ENCODE measurements at regions of chr11 and their contacts with region 1.

Region 1: DNA sequence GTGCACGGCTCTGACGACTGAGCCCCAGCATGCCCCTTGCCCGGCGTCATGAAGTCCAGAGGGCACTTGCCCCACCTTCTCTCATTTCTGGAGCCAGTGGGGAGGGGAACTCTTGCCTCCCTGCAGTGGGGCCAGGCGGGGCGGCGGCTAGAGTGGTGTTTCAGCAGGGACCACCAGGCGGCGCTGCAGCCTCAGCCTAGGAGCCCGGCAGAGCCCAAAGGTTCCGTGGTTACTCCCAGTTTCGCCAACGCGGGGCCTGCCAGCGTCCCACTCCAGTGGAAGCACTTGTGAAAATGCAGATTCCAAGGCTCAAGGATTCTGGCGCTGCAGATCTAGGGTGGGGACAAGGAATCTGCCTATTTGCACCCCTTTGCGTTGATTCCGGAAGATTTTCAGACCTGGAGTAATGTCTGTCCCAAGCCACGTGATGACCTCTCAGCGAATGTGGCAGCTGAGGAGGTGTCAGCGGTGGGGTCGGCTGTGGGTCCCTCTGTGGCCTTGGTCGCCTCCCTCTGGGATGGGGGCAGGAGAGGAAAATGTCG is 55.7 kb downstream of the CD82 start:
- DNase-seq: peak in 1 of 2 donors; percentile 49
- ATAC-seq: peak; percentile 41 to 63
- H3K4me3 ChIP-seq: no peak overlapping the region
- H3K27ac ChIP-seq: no peak overlapping the region
- H3K4me1 ChIP-seq: peaks cover 8 to 9% of the 10 kb centered on the region in 2 donors
- H3K27me3 ChIP-seq: no peaks in the 10 kb centered on the region
- CTCF ChIP-seq: peak; percentile 92 to 97 (median 95)
- POLR2A ChIP-seq: no peak

Region 2: GRCh38 chr11:44398266-44399045 is 222.8 kb before region 1 on chr11:
- in situ Hi-C with region 1: no loop called
- intact Hi-C with region 1: no loop called
- DNase-seq: no peak
- ATAC-seq: no peak
- H3K4me3 ChIP-seq: no peak overlapping the region
- H3K27ac ChIP-seq: no peak overlapping the region
- H3K4me1 ChIP-seq: no peaks in the 10 kb centered on the region
- H3K27me3 ChIP-seq: peaks cover 0 to 5% (median 5%) of the 10 kb centered on the region in 3 donors
- CTCF ChIP-seq: no peak
- POLR2A ChIP-seq: no peak

Region 3: GRCh38 chr11:44556735-44557409 is 64.3 kb before region 1 on chr11:
- in situ Hi-C with region 1: loop called in 3 of 4 experiments (anchors 5 kb)
- intact Hi-C with region 1: loop called (anchors 1 kb)
- DNase-seq: peak; percentile 34 to 43
- ATAC-seq: peak; percentile 79 to 81
- H3K4me3 ChIP-seq: no peak overlapping the region
- H3K27ac ChIP-seq: no peak overlapping the region
- H3K4me1 ChIP-seq: peaks cover 5 to 6% of the 10 kb centered on the region in 2 donors
- H3K27me3 ChIP-seq: no peaks in the 10 kb centered on the region
- CTCF ChIP-seq: peak; percentile 86 to 92 (median 92)
- POLR2A ChIP-seq: no peak

Region 4: DNA sequence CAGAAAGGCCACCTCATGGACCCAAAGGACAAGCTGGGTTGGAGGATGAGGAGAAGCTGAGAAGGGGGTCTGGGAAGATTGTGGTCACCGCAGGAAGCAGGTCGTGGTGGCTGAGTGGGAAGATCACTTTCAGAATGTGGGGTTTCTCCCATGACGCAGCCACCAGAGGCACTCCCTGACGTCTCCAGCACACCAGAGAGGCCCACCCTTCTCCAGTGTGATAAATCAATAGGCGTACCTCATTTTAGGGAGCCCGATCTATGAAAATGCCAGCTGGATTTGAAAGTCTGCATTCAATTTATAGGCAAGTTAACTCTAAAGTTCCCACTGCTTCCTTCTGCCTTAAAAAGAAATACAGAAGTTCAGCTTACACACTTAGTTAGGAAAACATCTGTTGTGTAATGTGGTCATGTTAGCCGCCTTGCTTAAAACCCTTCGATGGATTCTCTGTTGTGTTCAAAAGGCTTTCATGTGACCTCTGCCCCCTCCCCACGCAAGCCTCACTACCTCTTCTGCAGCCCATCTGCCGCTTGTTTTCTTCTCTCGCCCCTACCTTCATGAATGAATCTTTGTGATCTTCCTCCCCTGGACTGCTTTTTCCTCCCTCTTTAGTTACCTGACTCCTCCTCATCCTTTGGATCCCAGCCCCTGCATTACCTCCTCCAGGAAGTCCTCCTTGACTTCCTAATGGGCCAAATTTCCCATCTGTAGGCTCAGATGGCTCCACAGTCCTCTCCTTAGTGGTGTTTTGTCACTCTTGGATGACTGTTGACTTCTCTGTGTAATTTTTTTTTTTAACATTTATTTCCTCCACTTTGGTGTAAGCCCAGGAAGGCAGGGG is 116.3 kb after region 1 on chr11:
- in situ Hi-C with region 1: no loop called
- intact Hi-C with region 1: no loop called
- DNase-seq: no peak
- ATAC-seq: no peak
- H3K4me3 ChIP-seq: no peak overlapping the region
- H3K27ac ChIP-seq: no peak overlapping the region
- H3K4me1 ChIP-seq: peaks cover 0 to 6% of the 10 kb centered on the region in 2 donors
- H3K27me3 ChIP-seq: no peaks in the 10 kb centered on the region
- CTCF ChIP-seq: no peak
- POLR2A ChIP-seq: no peak

Region 5: DNA sequence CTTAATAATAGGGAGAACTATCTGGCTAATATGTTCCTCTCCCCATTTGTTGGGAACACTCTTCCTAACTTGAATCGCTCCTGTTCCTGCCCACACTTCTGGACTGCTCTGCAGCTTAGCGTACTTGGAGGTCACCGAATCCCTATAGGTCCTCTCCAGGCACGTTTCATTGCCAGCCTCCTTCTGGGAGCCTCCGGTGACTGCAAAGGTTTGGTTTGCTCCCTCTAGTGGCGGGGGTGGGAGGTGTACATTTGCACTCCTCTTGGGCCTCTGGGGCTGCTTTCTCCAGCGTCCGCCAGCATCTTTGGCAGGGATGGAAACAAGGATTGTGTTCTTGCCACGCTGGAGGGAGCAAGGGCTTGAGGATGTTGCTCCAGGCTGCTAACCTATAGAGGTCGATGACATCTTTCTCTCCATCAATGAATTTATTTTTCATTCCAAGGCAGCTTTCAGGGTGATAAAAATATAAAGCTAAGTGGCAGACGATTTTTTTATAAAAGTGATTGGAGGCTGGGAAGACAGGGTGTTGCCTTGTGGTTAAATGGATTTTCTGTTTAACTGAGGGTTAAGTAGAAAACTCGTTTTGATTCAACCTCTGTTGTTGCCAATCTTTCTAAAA is 154.3 kb after region 1 on chr11:
- in situ Hi-C with region 1: loop called in 1 of 4 experiments (anchors 5 kb)
- intact Hi-C with region 1: loop called (anchors 1 kb)
- DNase-seq: peak in 1 of 2 donors; percentile 33
- ATAC-seq: peak; percentile 68 to 69
- H3K4me3 ChIP-seq: no peak overlapping the region
- H3K27ac ChIP-seq: no peak overlapping the region
- H3K4me1 ChIP-seq: peaks cover 0 to 16% of the 10 kb centered on the region in 2 donors
- H3K27me3 ChIP-seq: no peaks in the 10 kb centered on the region
- CTCF ChIP-seq: peak; percentile 38 to 75 (median 63)
- POLR2A ChIP-seq: no peak

Region 6: DNA sequence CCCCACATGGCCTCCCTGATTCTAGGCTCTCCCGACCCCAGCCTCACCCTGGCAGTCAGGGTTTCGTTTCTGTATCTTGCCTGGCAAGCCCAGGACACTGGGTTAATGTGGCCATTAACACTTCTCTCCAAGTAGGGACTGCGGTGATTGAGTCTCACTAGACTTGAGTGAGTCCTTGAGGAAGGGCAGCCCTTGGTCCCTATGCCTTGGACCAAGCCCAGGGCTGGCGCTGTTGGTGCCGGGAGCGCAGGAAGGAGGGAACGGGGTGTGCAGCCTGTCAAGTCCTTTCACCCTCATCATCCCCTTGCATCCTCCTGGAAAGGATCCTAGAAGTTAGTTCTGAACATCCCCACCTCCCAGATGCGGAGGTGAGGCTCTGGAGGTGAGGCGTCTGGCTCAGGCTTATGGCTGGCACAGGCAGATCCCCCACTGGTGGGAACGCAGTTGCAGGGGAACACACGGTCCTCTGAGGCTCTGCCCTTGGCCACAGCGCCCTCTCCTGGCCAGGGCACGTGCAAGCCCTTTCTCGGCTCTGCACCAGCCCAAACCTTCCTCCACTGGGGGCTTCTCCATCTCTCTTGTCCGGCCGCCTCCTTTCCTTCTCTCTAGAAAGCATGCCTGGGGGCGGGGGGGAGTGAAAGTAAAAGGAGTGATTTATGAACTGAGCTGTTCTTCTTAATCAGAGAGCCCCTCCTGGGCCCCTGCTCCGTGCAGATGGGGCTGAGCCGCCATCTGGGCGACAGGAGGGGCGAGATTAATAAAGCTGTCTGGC is 272.8 kb after region 1 on chr11:
- in situ Hi-C with region 1: no loop called
- intact Hi-C with region 1: loop called (anchors 2 kb)
- DNase-seq: no peak
- ATAC-seq: peak; percentile 51 to 59
- H3K4me3 ChIP-seq: no peak overlapping the region
- H3K27ac ChIP-seq: peak overlapping the region in 1 of 4 donors; percentile 40
- H3K4me1 ChIP-seq: peaks cover 0 to 12% of the 10 kb centered on the region in 2 donors
- H3K27me3 ChIP-seq: no peaks in the 10 kb centered on the region
- CTCF ChIP-seq: peak; percentile 34 to 81 (median 74)
- POLR2A ChIP-seq: no peak

Region 7: DNA sequence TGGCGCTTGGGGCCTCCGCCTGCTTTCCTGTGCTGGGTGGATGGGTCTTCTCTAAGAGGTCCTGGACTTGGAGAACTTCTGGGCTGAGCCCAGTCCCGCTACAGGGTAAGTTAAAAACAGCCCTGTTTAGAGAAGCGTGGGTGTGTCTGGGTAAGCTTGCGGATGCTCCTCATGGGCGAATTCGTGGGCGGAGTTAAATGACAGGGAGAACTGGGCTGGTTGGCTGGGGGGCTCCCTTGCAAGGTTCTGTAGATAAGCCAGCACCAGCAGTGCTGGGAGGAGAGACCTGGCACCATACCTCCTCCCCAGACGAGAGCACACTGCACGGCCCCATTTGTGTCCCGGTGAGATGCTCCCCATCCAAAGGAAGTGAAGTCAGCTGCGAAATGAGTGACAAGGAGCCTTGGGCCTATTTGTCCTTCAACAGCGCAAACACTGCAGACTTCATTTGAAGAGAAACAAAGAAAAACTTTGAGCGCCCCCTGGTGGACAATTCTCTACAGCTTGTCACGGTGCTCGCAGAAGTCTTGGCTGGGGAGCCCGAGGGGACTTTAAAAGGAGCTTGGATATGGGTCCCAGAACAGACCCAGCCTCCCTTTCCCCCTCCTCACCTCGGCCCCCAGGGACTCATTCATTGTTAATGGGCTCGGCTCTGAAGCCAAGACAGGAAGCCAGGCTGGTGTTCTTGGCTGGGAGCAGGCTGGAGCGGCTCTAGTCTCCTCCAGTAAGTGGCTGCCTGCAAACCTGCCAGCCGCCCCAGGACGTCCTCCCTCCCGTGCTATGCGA is 290.0 kb after region 1 on chr11:
- in situ Hi-C with region 1: loop called (anchors 5 kb)
- intact Hi-C with region 1: loop called (anchors 1 kb)
- DNase-seq: peak; percentile 67 to 75
- ATAC-seq: peak; percentile 86 to 94
- H3K4me3 ChIP-seq: no peak overlapping the region
- H3K27ac ChIP-seq: no peak overlapping the region
- H3K4me1 ChIP-seq: peaks cover 0 to 6% of the 10 kb centered on the region in 2 donors
- H3K27me3 ChIP-seq: no peaks in the 10 kb centered on the region
- CTCF ChIP-seq: peak; percentile 52 to 88 (median 80)
- POLR2A ChIP-seq: no peak